HepG2 (cell line): ENCODE measurements at regions of chr11 and their contacts with region 1.

Region 1: DNA sequence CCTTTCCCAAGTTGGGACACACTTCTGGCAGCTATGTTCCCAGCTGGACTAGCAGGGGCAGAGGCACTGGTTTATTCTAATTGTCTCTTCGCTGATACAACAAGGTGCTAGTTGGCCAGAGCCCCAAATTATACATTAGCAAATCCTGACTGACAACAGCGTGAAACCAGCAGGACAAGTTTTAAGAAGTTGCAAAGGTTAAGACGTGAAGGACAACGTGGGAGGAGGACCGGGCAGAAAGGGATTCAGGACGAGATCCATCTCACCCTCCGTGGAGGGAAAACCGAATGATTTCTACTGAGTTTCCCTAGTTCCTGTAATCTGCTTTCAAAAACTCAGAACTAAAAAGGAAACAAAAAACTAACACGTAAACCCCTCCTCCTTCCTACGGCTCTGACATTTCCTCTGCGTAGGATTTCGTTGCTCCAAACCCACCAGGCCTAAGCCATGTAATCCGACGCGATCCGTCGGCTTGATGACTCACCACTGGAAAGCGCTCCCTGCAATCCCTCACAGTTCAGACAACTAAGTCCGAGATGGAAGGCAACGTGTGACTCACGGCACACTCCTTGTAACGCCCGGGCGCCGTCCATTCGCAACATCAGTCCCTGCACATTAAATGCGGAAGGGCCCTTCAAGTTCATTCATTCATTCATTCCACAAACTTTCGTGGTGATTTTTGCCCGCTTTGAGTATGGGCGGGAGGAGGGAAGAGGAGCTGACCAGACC is 703 bp downstream of the POGLUT3 start:
- DNase-seq: peak; percentile 89
- ATAC-seq: peak; percentile 93
- H3K4me3 ChIP-seq: peak overlapping the region; percentile 59 to 77 (median 61)
- H3K27ac ChIP-seq: peak overlapping the region; percentile 79
- H3K4me1 ChIP-seq: peaks cover 46% of the 10 kb centered on the region
- H3K27me3 ChIP-seq: no peaks in the 10 kb centered on the region
- CTCF ChIP-seq: no peak
- EP300 ChIP-seq: no peak
- POLR2A ChIP-seq: peak; percentile 76 to 83
- RAD21 ChIP-seq: no peak

Region 2: DNA sequence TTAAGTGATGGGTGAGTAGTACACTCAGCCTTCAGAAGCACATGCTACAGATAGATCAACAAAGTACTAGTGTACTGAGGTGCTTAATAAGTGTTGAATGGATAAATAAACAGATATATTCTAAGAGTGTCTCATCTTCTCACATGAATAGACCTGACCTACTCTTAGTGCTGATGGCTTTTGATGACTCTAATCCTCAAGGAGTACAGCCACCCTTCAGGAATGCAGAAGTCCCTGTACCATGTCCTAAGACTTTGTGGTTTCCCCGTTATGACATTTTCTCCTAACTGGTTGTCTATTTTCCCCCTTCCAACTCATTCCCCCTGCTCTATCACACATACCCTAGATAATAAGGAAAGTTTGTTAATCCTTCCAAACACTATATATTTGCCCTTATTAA is 91.8 kb before region 1 on chr11:
- CTCF ChIA-PET with region 1: no interaction called
- POLR2A ChIA-PET with region 1: no interaction called
- in situ Hi-C with region 1: no loop called
- intact Hi-C with region 1: no loop called
- DNase-seq: no peak
- ATAC-seq: no peak
- H3K4me3 ChIP-seq: no peak overlapping the region
- H3K27ac ChIP-seq: no peak overlapping the region
- H3K4me1 ChIP-seq: peaks cover 12% of the 10 kb centered on the region
- H3K27me3 ChIP-seq: no peaks in the 10 kb centered on the region
- CTCF ChIP-seq: no peak
- EP300 ChIP-seq: no peak
- POLR2A ChIP-seq: no peak
- RAD21 ChIP-seq: no peak

Region 3: GRCh38 chr11:108467091-108467823 is 30.2 kb before region 1 on chr11 and contains the start of gene C11orf65:
- CTCF ChIA-PET with region 1: no interaction called
- POLR2A ChIA-PET with region 1: interaction called, 5 read pairs
- in situ Hi-C with region 1: no loop called
- intact Hi-C with region 1: loop called (anchors 1 kb)
- DNase-seq: peak; percentile 93
- ATAC-seq: peak; percentile 99
- H3K4me3 ChIP-seq: peak within 1 kb of the TSS; percentile 66 to 82 (median 81)
- H3K27ac ChIP-seq: peak within 1 kb of the TSS; percentile 99
- H3K4me1 ChIP-seq: peaks cover 14% of the 10 kb centered on the region
- H3K27me3 ChIP-seq: no peaks in the 10 kb centered on the region; a peak in 1 of 5 replicates
- CTCF ChIP-seq: no peak
- EP300 ChIP-seq: no peak
- POLR2A ChIP-seq: peak; percentile 98 to 99
- RAD21 ChIP-seq: no peak
- total RNA-seq, gene C11orf65: 0.34 and 0.42 TPM in 2 replicates

Region 4: GRCh38 chr11:108593214-108593922 is 95.9 kb after region 1 on chr11 and contains the start of gene EXPH5:
- CTCF ChIA-PET with region 1: no interaction called
- POLR2A ChIA-PET with region 1: no interaction called
- in situ Hi-C with region 1: no loop called
- intact Hi-C with region 1: loop called (anchors 10 kb)
- DNase-seq: peak; percentile 83
- ATAC-seq: peak; percentile 95
- H3K4me3 ChIP-seq: peak within 1 kb of the TSS; percentile 56 to 69 (median 57)
- H3K27ac ChIP-seq: no peak within 1 kb of the TSS
- H3K4me1 ChIP-seq: peaks cover 10% of the 10 kb centered on the region
- H3K27me3 ChIP-seq: peaks cover 2 to 18% of the 10 kb centered on the region in 2 experiments; a peak in 4 of 5 replicates
- CTCF ChIP-seq: no peak
- EP300 ChIP-seq: no peak
- POLR2A ChIP-seq: no peak
- RAD21 ChIP-seq: no peak
- total RNA-seq, gene EXPH5: 0.02 and 0.15 TPM in 2 replicates

Region 5: DNA sequence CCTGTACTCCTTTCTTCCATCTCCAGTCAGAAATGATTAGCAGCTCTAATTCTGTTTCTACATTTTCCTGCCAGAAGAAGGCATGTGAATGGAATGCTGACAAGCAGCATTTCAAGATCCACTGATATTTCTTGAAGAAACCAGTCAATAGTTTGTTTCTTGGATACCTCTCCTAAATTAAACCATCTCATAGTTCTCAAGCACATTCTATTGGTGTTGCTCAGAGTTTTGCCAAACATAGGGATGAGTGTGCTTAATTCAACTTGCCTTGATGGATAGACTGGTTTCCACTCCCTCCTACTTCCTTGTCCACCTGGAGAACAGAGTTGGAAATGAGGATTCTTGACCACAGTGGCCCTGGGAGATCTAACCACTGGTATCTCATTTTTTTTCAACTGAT is 137.6 kb after region 1 on chr11:
- CTCF ChIA-PET with region 1: no interaction called
- POLR2A ChIA-PET with region 1: no interaction called
- in situ Hi-C with region 1: no loop called
- intact Hi-C with region 1: loop called (anchors 5 kb)
- DNase-seq: no peak
- ATAC-seq: no peak
- H3K4me3 ChIP-seq: no peak overlapping the region
- H3K27ac ChIP-seq: no peak overlapping the region
- H3K4me1 ChIP-seq: peaks cover 7% of the 10 kb centered on the region; the same call in 1 of the 2 replicates
- H3K27me3 ChIP-seq: no peaks in the 10 kb centered on the region
- CTCF ChIP-seq: no peak
- EP300 ChIP-seq: no peak
- POLR2A ChIP-seq: no peak
- RAD21 ChIP-seq: no peak